Dorsolateral prefrontal cortex (tissue), 120 donors: ENCODE measurements at regions of chr11 and their contacts with region 1.

Region 1: DNA sequence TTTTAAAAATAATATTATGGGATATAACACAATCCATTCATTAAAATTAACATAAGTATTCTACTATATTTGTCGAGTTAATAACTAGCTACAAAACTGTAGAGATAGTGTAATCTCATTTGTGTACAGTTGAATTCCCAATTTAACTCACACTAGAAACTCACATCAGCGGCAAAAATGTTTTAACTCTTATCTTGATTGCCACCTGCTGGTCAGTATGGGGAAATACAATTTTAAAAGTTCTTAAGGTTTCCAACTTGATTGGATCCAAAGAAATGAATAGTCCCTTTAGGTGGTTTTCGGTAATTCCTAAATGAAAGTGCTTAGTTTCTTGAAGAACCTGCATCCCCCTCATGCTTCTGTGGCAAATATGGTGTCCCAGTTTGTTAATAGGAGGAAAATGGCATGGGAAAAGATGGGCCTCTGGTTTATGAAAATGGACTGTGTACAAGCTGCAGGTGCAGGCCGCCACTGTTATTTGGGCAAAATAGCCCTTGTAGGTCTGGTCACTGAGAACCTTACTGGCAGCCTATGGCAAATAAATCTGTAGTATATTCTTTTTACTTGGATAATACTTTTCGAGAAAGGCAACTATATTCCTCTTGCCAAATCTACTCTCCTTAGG is 33.7 kb upstream of the SLC17A6 start:
- DNase-seq: no peak
- H3K4me3 ChIP-seq: no peak overlapping the region
- H3K27ac ChIP-seq: no peak overlapping the region
- H3K27me3 ChIP-seq: peaks cover 0 to 13% (median 0%) of the 10 kb centered on the region in 45 donors
- CTCF ChIP-seq: peak; percentile 67 to 92 (median 80)

Region 2: DNA sequence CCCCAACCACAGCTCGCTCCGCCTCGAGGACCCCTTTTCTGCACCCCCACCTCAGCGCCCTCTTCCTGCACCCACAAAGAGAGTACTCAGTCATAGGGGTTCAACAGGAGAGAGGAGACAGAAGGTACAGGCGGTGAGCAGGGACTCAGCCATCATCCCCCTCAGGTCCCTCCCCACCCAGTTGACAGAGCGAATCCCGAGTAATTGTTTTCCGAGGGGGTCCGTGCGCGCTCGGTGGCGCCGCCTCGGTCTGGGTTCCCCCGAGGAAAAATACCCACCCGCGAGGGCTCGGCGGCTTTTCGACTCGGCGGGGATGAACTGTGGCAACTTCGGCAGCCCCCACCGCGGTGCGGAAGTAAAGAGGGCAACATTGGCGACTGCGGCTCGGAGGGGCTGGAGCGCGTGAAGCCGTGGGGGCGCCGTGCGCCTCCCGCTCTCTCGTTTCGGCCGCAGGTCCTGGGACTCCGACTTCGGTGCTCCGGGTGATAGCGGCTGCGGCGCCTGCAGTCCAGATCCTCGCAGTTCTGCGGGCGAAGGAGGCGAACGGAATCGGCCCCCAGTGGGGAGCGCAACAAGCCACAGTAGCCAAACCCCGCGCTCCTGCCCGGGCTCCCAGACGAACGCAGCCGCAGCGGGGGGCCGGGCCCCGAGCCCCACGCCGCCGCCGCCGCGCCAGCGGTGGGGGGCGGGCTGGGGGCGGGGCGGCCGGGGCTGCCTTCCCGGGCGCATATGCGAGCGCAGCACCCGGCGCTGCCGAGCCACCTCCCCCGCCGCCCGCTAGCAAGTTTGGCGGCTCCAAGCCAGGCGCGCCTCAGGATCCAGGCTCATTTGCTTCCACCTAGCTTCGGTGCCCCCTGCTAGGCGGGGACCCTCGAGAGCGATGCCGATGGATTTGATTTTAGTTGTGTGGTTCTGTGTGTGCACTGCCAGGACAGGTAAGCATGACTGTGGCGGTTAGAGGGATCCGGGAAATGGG is 1635.3 kb before region 1 on chr11 and contains the start of gene NELL1:
- intact Hi-C with region 1: loop called in 1 of 2 experiments (anchors 10 kb)
- DNase-seq: peak in 2 of 10 donors; percentile 49 to 50
- H3K4me3 ChIP-seq: peak within 1 kb of the TSS; percentile 20 to 75 (median 58)
- H3K27ac ChIP-seq: peak within 1 kb of the TSS in 36 of 59 donors; percentile 1 to 72 (median 52)
- H3K27me3 ChIP-seq: peaks cover 0 to 57% (median 23%) of the 10 kb centered on the region in 45 donors
- CTCF ChIP-seq: peak in 1 of 56 donors; percentile 3
- total RNA-seq, gene NELL1: 15.1 to 81.1 (median 48.0) TPM

Region 3: DNA sequence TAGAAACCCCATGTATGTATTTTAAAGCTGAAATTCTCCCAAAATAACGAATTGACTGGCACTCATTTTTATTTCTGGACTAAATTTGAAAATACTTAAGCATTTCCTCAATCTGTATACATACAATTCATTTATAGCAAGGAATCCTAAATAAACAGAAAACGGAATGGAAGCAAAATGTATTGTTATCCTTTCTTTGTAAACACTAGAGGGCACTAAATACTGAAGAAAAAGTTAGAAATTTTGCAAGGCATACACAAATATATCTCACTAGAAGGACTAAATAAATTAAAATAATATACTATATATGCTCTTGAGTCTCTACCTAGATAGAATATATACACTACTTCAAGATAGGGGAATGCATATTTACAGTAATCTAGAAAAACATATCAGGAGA is 134.6 kb before region 1 on chr11:
- intact Hi-C with region 1: loop called in 1 of 2 experiments (anchors 10 kb)
- DNase-seq: no peak
- H3K4me3 ChIP-seq: no peak overlapping the region
- H3K27ac ChIP-seq: no peak overlapping the region
- H3K27me3 ChIP-seq: no peaks in the 10 kb centered on the region
- CTCF ChIP-seq: peak in 54 of 56 donors; percentile 23 to 79 (median 54)

Region 4: DNA sequence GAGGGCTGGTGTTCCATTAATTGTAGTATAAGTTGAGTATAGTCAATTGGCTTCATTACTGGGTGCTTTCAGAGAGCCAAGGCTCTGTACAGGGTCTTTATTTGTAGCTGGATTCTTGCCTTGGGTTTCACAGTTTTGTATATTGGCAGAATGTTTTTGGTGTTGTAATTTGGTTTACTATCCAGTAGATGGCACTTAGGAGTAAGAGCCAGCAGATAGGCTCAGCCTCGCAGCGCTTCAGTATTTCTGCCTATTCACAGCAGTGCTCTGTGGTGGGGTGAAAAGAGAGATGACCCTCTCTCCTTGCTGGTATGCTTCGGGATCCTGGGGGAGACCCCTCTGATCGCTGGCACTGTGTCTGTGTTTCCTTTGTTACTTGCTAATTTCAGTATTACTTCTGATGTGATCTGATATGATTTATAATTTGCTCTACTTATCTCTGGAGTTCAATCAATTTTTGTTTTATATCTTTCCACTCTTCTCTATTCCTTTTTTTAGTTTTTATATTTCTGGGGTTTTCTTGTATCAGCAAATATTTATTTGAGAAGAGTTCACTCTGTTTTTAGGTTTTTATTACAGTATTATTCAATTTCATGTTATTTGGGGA is 59.4 kb before region 1 on chr11:
- intact Hi-C with region 1: loop called in 1 of 2 experiments (anchors 10 kb)
- DNase-seq: peak in 5 of 10 donors; percentile 2 to 34 (median 30)
- H3K4me3 ChIP-seq: no peak overlapping the region
- H3K27ac ChIP-seq: no peak overlapping the region
- H3K27me3 ChIP-seq: peaks cover 0 to 5% (median 0%) of the 10 kb centered on the region in 45 donors
- CTCF ChIP-seq: peak; percentile 31 to 75 (median 58)